H1 (cell line): ENCODE measurements at regions of chr10 and their contacts with region 1.

Region 1: GRCh38 chr10:102101152-102101551 is 19.0 kb downstream of the LDB1 start:
- DNase-seq: no peak
- H3K4me3 ChIP-seq: no peak overlapping the region
- H3K27ac ChIP-seq: no peak overlapping the region
- H3K4me1 ChIP-seq: no peaks in the 10 kb centered on the region
- H3K27me3 ChIP-seq: no peaks in the 10 kb centered on the region
- CTCF ChIP-seq: peak in 2 of 3 experiments; percentile 13 to 28; a peak in 2 of 4 replicates
- EP300 ChIP-seq: no peak
- POLR2A ChIP-seq: no peak
- RAD21 ChIP-seq: peak; percentile 4 to 33; a peak in 1 of 4 replicates

Region 2: DNA sequence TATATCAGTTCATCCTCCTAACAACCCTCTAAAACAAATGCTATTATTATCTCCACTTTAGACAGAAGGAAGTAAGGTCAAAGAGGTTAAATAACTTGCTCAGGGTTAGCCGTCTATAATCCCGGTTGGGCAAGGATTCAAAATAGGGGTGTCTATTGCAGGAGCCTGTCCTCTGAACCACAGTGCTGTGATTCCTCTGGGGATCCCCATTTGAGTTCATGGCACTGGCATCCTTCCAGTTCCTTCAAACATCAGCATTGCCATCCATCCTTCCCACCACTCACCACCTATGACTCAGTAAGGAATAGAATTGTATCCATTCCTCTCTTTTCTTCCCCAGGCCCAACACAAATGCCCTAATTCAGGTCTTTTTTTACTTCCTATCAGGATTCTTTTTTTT is 10.4 kb before region 1 on chr10:
- CTCF ChIA-PET with region 1: interaction called, 4 read pairs
- POLR2A ChIA-PET with region 1: interaction called, 10 read pairs
- DNase-seq: no peak
- H3K4me3 ChIP-seq: no peak overlapping the region
- H3K27ac ChIP-seq: no peak overlapping the region
- H3K4me1 ChIP-seq: no peaks in the 10 kb centered on the region
- H3K27me3 ChIP-seq: no peaks in the 10 kb centered on the region
- CTCF ChIP-seq: no peak
- EP300 ChIP-seq: no peak
- POLR2A ChIP-seq: no peak
- RAD21 ChIP-seq: no peak

Region 3: GRCh38 chr10:102114861-102115618 is 13.9 kb after region 1 on chr10:
- CTCF ChIA-PET with region 1: interaction called, 86 read pairs
- POLR2A ChIA-PET with region 1: interaction called, 34 read pairs
- DNase-seq: peak in 1 of 2 experiments; percentile 85
- H3K4me3 ChIP-seq: peak overlapping the region; percentile 46 to 96 (median 69)
- H3K27ac ChIP-seq: peak overlapping the region; percentile 59; the same call in 1 of the 2 replicates
- H3K4me1 ChIP-seq: peaks cover 22 to 48% (median 31%) of the 10 kb centered on the region in 4 experiments
- H3K27me3 ChIP-seq: no peaks in the 10 kb centered on the region
- CTCF ChIP-seq: no peak
- EP300 ChIP-seq: no peak
- POLR2A ChIP-seq: peak; percentile 78 to 88
- RAD21 ChIP-seq: no peak